Naive thymus-derived CD4-positive, alpha-beta T cell (primary cell): ENCODE measurements at regions of chr12 and their contacts with region 1.

Region 1: DNA sequence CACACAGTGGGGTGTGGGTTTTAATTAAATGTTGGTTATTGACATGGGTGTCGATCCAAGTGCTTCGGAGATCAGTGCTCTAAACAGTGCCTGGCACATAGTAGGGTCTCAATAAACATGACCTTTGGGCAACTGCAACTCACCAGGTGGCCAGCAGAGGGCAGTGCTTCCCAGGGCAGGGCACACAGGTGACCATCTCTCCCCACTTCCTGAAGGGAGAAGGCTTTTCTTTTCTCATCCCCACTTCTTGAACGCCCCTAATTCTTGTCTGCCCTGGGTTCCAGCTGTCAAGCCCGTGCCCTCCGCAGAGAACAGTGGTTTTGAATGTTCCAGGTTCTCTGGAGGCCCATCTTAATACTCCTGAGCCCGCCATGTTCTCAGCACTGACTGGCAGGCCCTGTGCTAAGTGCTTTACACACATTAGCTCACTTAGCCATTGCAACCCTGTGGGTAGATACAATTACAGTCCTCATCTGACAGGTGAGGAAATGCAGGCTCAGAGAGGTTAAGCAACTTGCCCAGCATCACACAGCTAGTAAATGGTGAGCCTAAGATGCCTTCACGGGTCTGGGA is 16.3 kb downstream of the RAPGEF3 start:
- DNase-seq: peak; percentile 41 to 84 (median 58)
- ATAC-seq: peak; percentile 65
- H3K4me3 ChIP-seq: no peak overlapping the region
- H3K4me3 Mint-ChIP-seq: peak overlapping the region in 2 of 10 donors; percentile 18 to 35
- H3K27ac ChIP-seq: no peak overlapping the region
- H3K27ac Mint-ChIP-seq: peak overlapping the region in 1 of 9 donors; percentile 44
- H3K4me1 ChIP-seq: peaks cover 13 to 14% of the 10 kb centered on the region in 2 donors
- H3K4me1 Mint-ChIP-seq: peaks cover 10 to 44% (median 29%) of the 10 kb centered on the region in 7 donors
- H3K27me3 ChIP-seq: no peaks in the 10 kb centered on the region
- H3K27me3 Mint-ChIP-seq: peaks cover 0 to 17% (median 0%) of the 10 kb centered on the region in 5 donors

Region 2: GRCh38 chr12:47207340-47207717 is 535.0 kb before region 1 on chr12:
- CTCF ChIA-PET with region 1: no interaction called
- POLR2A ChIA-PET with region 1: no interaction called
- intact Hi-C with region 1: no loop called
- DNase-seq: peak in 4 of 9 donors; percentile 27 to 49 (median 38)
- ATAC-seq: peak; percentile 79
- H3K4me3 ChIP-seq: peak overlapping the region; percentile 42
- H3K4me3 Mint-ChIP-seq: peak overlapping the region; percentile 60 to 99 (median 84)
- H3K27ac ChIP-seq: peak overlapping the region; percentile 76
- H3K27ac Mint-ChIP-seq: peak overlapping the region; percentile 41 to 98 (median 93)
- H3K4me1 ChIP-seq: peaks cover 72 to 78% of the 10 kb centered on the region in 2 donors
- H3K4me1 Mint-ChIP-seq: peaks cover 50 to 93% (median 75%) of the 10 kb centered on the region in 7 donors
- H3K27me3 ChIP-seq: no peaks in the 10 kb centered on the region
- H3K27me3 Mint-ChIP-seq: no peaks in the 10 kb centered on the region

Region 3: GRCh38 chr12:47458270-47458669 is 284.1 kb before region 1 on chr12:
- CTCF ChIA-PET with region 1: no interaction called
- POLR2A ChIA-PET with region 1: no interaction called
- intact Hi-C with region 1: no loop called
- DNase-seq: no peak
- ATAC-seq: no peak
- H3K4me3 ChIP-seq: no peak overlapping the region
- H3K4me3 Mint-ChIP-seq: no peak overlapping the region
- H3K27ac ChIP-seq: no peak overlapping the region
- H3K27ac Mint-ChIP-seq: no peak overlapping the region
- H3K4me1 ChIP-seq: no peaks in the 10 kb centered on the region
- H3K4me1 Mint-ChIP-seq: no peaks in the 10 kb centered on the region
- H3K27me3 ChIP-seq: no peaks in the 10 kb centered on the region
- H3K27me3 Mint-ChIP-seq: peaks cover 0 to 4% (median 0%) of the 10 kb centered on the region in 5 donors

Region 4: GRCh38 chr12:47651368-47652254 is 90.7 kb before region 1 on chr12:
- CTCF ChIA-PET with region 1: interaction called, 3 read pairs
- POLR2A ChIA-PET with region 1: no interaction called
- intact Hi-C with region 1: loop called in 1 of 2 experiments (anchors 1 kb)
- DNase-seq: peak in 8 of 9 donors; percentile 39 to 69 (median 56)
- ATAC-seq: peak; percentile 97
- H3K4me3 ChIP-seq: peak overlapping the region; percentile 38
- H3K4me3 Mint-ChIP-seq: peak overlapping the region; percentile 21 to 75 (median 44)
- H3K27ac ChIP-seq: peak overlapping the region; percentile 9
- H3K27ac Mint-ChIP-seq: peak overlapping the region in 8 of 9 donors; percentile 11 to 94 (median 64)
- H3K4me1 ChIP-seq: peaks cover 5 to 6% of the 10 kb centered on the region in 2 donors
- H3K4me1 Mint-ChIP-seq: peaks cover 8 to 21% (median 16%) of the 10 kb centered on the region in 7 donors
- H3K27me3 ChIP-seq: no peaks in the 10 kb centered on the region
- H3K27me3 Mint-ChIP-seq: no peaks in the 10 kb centered on the region

Region 5: GRCh38 chr12:47758834-47759690 is 16.7 kb after region 1 on chr12 and contains the start of gene RAPGEF3:
- CTCF ChIA-PET with region 1: interaction called, 130 read pairs
- POLR2A ChIA-PET with region 1: interaction called, 6 read pairs
- intact Hi-C with region 1: loop called (anchors 1 to 2 kb)
- DNase-seq: peak; percentile 47 to 81 (median 60)
- ATAC-seq: peak; percentile 91
- H3K4me3 ChIP-seq: peak within 1 kb of the TSS; percentile 66
- H3K4me3 Mint-ChIP-seq: peak within 1 kb of the TSS; percentile 61 to 85 (median 80)
- H3K27ac ChIP-seq: peak within 1 kb of the TSS; percentile 27
- H3K27ac Mint-ChIP-seq: peak within 1 kb of the TSS in 4 of 9 donors; percentile 29 to 55 (median 47)
- H3K4me1 ChIP-seq: peaks cover 9 to 11% of the 10 kb centered on the region in 2 donors
- H3K4me1 Mint-ChIP-seq: peaks cover 0 to 23% (median 9%) of the 10 kb centered on the region in 7 donors
- H3K27me3 ChIP-seq: no peaks in the 10 kb centered on the region
- H3K27me3 Mint-ChIP-seq: peaks cover 0 to 5% (median 0%) of the 10 kb centered on the region in 5 donors
- total RNA-seq, gene RAPGEF3: 0.08 to 1.9 (median 1.1) TPM in 4 of 5 experiments, not detected in the other

Region 6: DNA sequence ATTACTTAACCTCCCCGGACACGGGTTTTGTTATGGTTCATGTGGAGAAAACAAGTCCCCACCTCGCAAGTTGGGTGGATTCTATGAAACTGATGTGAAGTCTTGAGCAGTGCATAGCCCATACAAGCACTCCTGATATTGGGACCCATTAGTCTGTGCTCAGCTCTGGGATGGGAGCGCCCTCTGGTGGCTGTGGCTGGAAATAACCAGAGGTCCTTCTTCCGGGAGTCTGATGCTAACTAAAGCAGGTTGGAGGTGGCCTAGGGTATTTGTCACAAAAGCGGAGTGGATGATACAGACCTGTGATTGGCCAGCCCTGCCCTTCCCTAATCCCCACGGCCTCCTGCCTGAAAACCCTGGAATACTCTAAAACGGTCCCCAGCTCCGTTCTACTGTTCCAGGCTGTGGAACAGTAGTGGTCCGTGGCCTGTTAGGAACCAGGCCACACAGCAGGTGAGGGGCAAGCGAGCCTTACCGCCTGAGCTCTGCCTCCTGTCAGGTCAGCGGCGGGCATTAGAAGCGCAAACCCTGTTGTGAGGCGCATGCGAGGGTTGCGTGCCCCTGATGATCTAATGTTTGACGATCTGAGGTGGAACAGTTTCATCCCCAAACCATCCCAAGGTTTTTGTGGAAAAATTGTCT is 37.1 kb after region 1 on chr12:
- CTCF ChIA-PET with region 1: interaction called, 346 read pairs
- POLR2A ChIA-PET with region 1: interaction called, 5 read pairs
- intact Hi-C with region 1: loop called (anchors 1 kb)
- DNase-seq: peak; percentile 77 to 96 (median 88)
- ATAC-seq: peak; percentile 95
- H3K4me3 ChIP-seq: no peak overlapping the region
- H3K4me3 Mint-ChIP-seq: no peak overlapping the region
- H3K27ac ChIP-seq: no peak overlapping the region
- H3K27ac Mint-ChIP-seq: peak overlapping the region; percentile 35 to 82 (median 60)
- H3K4me1 ChIP-seq: no peaks in the 10 kb centered on the region
- H3K4me1 Mint-ChIP-seq: peaks cover 19 to 46% (median 25%) of the 10 kb centered on the region in 7 donors
- H3K27me3 ChIP-seq: no peaks in the 10 kb centered on the region
- H3K27me3 Mint-ChIP-seq: no peaks in the 10 kb centered on the region

Region 7: DNA sequence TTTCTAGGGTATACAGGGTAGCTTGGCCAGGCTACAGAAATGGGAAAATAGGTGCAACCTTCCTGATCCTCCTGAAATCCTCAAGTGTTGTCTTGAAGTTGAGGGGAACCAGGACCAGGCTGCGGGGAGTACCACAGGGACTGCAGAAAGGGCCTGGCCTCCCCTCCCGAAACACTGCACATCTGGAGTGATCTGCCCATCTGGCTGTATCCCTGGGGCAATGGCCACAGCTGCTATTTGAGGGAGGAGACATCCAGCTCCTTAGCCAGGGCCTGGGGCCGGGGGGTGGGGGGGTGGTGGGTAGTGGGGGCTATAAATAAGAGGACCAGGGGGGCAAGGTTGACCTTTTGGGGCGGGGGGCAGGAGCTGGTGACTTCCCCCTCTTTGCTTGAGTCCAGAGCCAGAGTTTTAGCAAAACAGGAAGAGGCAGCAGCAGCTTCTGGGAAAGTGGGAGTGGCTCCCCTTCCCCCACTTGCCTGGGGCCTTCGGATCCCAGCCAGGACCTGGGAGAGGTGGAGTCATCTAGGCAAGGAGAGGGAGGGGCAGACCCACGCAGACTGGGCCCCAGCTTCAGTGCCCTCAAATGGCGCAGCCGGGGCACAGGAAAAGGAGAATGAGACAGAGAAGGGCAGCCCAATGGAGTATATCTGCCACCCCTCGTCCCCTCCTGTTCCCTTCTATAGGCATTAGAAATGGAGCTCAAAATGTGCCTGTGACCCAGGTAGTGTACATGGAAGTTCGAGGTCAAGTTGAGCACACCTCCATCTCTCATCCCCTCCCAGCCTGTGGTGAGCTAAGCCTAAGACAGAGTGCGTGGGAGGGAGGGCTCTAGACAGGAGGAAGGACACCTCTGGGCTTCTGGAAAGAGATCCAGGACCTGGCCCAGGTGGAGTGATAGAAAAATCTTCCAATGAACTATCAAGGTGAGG is 86.5 kb after region 1 on chr12:
- CTCF ChIA-PET with region 1: interaction called, 330 read pairs
- POLR2A ChIA-PET with region 1: interaction called, 5 read pairs
- intact Hi-C with region 1: no loop called
- DNase-seq: peak in 1 of 9 donors; percentile 36
- ATAC-seq: no peak
- H3K4me3 ChIP-seq: no peak overlapping the region
- H3K4me3 Mint-ChIP-seq: peak overlapping the region in 8 of 10 donors; percentile 12 to 73 (median 51)
- H3K27ac ChIP-seq: peak overlapping the region; percentile 52
- H3K27ac Mint-ChIP-seq: peak overlapping the region; percentile 73 to 97 (median 86)
- H3K4me1 ChIP-seq: peaks cover 51 to 97% of the 10 kb centered on the region in 2 donors
- H3K4me1 Mint-ChIP-seq: peaks cover 70 to 98% (median 88%) of the 10 kb centered on the region in 7 donors
- H3K27me3 ChIP-seq: no peaks in the 10 kb centered on the region
- H3K27me3 Mint-ChIP-seq: no peaks in the 10 kb centered on the region

Region 8: GRCh38 chr12:47949441-47950308 is 207.3 kb after region 1 on chr12:
- CTCF ChIA-PET with region 1: interaction called, 4 read pairs
- POLR2A ChIA-PET with region 1: no interaction called
- intact Hi-C with region 1: loop called in 1 of 2 experiments (anchors 2 kb)
- DNase-seq: peak in 7 of 9 donors; percentile 22 to 67 (median 45)
- ATAC-seq: peak; percentile 72
- H3K4me3 ChIP-seq: no peak overlapping the region
- H3K4me3 Mint-ChIP-seq: no peak overlapping the region
- H3K27ac ChIP-seq: no peak overlapping the region
- H3K27ac Mint-ChIP-seq: peak overlapping the region in 1 of 9 donors; percentile 38
- H3K4me1 ChIP-seq: no peaks in the 10 kb centered on the region
- H3K4me1 Mint-ChIP-seq: peaks cover 0 to 18% (median 0%) of the 10 kb centered on the region in 7 donors
- H3K27me3 ChIP-seq: no peaks in the 10 kb centered on the region
- H3K27me3 Mint-ChIP-seq: peaks cover 4 to 13% (median 5%) of the 10 kb centered on the region in 5 donors